ENCODE measurements at regions of chr2 and their contacts with region 1.

Region 1: GRCh38 chr2:189698020-189698887 is 23.8 kb downstream of the ANKAR start:
- DNase-seq: peak; percentile 19
- H3K4me3 ChIP-seq: no peak overlapping the region
- H3K27ac ChIP-seq: no peak overlapping the region
- H3K4me1 ChIP-seq: no peaks in the 10 kb centered on the region
- H3K27me3 ChIP-seq: no peaks in the 10 kb centered on the region
- CTCF ChIP-seq: peak; percentile 48

Region 2: DNA sequence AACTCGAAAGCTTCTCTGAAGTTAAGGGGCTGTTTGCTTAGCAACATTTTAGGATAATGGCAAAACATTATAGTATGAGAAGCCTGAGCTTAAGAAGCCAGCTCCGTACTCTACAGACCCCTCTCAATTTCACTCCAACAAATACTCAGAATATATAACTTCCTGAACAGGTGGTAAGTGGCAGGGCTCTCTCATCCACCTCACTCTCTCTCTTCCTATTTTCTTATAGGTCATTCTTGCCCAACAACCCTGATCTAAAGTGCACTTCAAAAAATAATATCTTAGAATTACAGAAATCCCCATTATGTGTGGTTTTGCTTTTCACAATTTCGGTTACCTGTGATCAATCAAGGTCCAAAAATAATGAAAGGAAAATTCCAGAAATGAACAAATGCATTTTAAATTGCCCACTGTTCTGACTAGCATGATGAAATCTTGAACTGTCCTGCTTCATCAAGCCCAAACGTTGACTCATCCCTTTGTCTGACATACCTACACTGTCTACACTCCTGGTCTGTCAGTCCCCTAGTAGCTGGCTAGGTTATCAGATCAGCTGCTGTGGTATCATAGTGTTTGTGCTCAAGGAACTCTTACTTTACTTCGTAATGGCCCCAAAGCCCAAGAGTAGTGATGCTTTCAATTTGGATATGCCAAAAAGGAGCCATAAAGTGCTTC is 395.8 kb before region 1 on chr2:
- CTCF ChIA-PET with region 1: no interaction called
- dilution Hi-C with region 1: no loop called
- in situ Hi-C with region 1: no loop called
- intact Hi-C with region 1: no loop called
- DNase-seq: peak; percentile 78
- H3K4me3 ChIP-seq: no peak overlapping the region
- H3K27ac ChIP-seq: peak overlapping the region; percentile 59
- H3K4me1 ChIP-seq: peaks cover 29% of the 10 kb centered on the region
- H3K27me3 ChIP-seq: no peaks in the 10 kb centered on the region
- CTCF ChIP-seq: no peak

Region 3: GRCh38 chr2:189674374-189675112 is 23.7 kb before region 1 on chr2 and contains the start of gene ANKAR:
- CTCF ChIA-PET with region 1: no interaction called
- dilution Hi-C with region 1: no loop called
- in situ Hi-C with region 1: no loop called
- intact Hi-C with region 1: loop called (anchors 1 kb)
- DNase-seq: peak; percentile 77
- H3K4me3 ChIP-seq: peak within 1 kb of the TSS; percentile 45 to 72 (median 60)
- H3K27ac ChIP-seq: peak within 1 kb of the TSS; percentile 50
- H3K4me1 ChIP-seq: peaks cover 14% of the 10 kb centered on the region
- H3K27me3 ChIP-seq: no peaks in the 10 kb centered on the region
- CTCF ChIP-seq: peak; percentile 42 to 67
- total RNA-seq, gene ANKAR: 2.5 to 6.7 TPM

Region 4: GRCh38 chr2:189685540-189686229 is 12.6 kb before region 1 on chr2:
- CTCF ChIA-PET with region 1: no interaction called
- dilution Hi-C with region 1: no loop called
- in situ Hi-C with region 1: no loop called
- intact Hi-C with region 1: no loop called
- DNase-seq: peak; percentile 53
- H3K4me3 ChIP-seq: no peak overlapping the region
- H3K27ac ChIP-seq: no peak overlapping the region
- H3K4me1 ChIP-seq: peaks cover 15% of the 10 kb centered on the region
- H3K27me3 ChIP-seq: no peaks in the 10 kb centered on the region
- CTCF ChIP-seq: no peak

Measured in mammary epithelial cell (primary cell).